HepG2 (cell line): ENCODE measurements at regions of chr22 and their contacts with region 1.

Region 1: GRCh38 chr22:32528984-32529982 is 54.7 kb downstream of the FBXO7 start:
- DNase-seq: peak; percentile 91
- ATAC-seq: peak; percentile 72
- H3K4me3 ChIP-seq: peak overlapping the region; percentile 27 to 52 (median 51); a peak in 3 of 6 replicates
- H3K27ac ChIP-seq: peak overlapping the region; percentile 76
- H3K4me1 ChIP-seq: peaks cover 65% of the 10 kb centered on the region
- H3K27me3 ChIP-seq: no peaks in the 10 kb centered on the region
- CTCF ChIP-seq: peak; percentile 99
- EP300 ChIP-seq: peak in 1 of 2 experiments; percentile 75; a peak in 2 of 4 replicates
- POLR2A ChIP-seq: 0 out of 4 replicates have a peak, but pooled peaks of 1 of the 2 experiments have one; percentile 31
- RAD21 ChIP-seq: peak; percentile 97

Region 2: GRCh38 chr22:32457031-32457430 is 72.3 kb before region 1 on chr22:
- CTCF ChIA-PET with region 1: no interaction called
- POLR2A ChIA-PET with region 1: no interaction called
- in situ Hi-C with region 1: no loop called
- intact Hi-C with region 1: no loop called
- DNase-seq: no peak
- ATAC-seq: no peak
- H3K4me3 ChIP-seq: no peak overlapping the region
- H3K27ac ChIP-seq: no peak overlapping the region
- H3K4me1 ChIP-seq: no peaks in the 10 kb centered on the region
- H3K27me3 ChIP-seq: peaks cover 0 to 14% of the 10 kb centered on the region in 2 experiments; a peak in 3 of 5 replicates
- CTCF ChIP-seq: no peak
- EP300 ChIP-seq: no peak
- POLR2A ChIP-seq: no peak
- RAD21 ChIP-seq: no peak

Region 3: DNA sequence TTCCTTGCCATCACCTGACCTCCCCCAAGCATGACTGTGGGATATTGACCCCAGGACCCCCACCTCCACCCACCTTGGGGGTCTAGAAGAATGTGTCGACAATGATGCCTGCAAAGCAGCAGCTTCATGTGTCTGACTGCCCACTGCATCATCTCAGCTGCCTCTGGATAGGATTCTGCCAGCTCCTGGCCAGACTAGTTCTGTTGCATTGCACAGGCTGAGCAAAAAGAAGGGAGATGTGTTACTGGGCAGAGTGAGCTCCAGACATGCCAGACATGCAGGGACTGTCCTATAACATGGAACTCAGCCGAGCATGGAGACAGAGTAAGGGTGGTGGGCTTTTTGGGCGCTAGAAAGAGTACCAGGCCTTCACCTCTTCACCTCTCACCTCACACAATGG is 18.0 kb before region 1 on chr22:
- CTCF ChIA-PET with region 1: no interaction called
- POLR2A ChIA-PET with region 1: interaction called, 11 read pairs
- in situ Hi-C with region 1: no loop called
- intact Hi-C with region 1: no loop called
- DNase-seq: no peak
- ATAC-seq: no peak
- H3K4me3 ChIP-seq: no peak overlapping the region
- H3K27ac ChIP-seq: peak overlapping the region; percentile 86
- H3K4me1 ChIP-seq: peaks cover 41% of the 10 kb centered on the region
- H3K27me3 ChIP-seq: no peaks in the 10 kb centered on the region
- CTCF ChIP-seq: no peak
- EP300 ChIP-seq: no peak
- POLR2A ChIP-seq: no peak
- RAD21 ChIP-seq: no peak

Region 4: DNA sequence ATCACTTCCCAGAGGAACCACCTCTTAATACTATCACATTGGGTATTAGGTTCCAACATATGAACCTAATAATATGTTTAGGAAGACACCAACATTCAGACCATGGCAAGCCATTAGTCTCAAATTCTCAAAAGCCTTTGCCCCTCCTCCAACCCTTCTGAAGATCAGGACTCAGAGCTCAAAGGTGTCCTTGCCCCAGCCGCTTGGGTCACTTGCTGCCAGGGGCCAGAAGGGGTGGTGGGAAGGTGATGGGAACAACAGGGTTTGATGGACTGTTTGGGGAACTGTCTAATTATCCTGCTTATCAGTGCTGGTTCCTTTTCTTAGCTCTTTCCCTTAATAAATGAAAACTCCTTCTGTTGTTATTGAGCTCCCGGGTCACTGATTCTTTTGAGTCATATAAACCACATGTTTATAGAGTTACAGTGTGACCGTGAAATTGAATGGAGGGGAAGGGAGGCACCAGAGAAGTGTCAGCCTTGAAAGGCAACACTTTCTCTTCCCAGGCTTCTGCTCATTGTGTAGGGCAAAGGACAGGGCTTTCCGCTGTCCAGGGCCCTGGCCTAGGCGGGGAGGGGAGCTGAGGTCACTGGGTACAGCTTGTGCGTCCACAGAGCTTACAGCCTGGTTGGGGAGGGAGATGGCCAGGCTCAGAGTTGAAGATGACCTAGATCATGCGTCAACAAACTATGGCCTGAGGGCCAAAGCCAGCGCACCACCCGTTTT is 50.4 kb after region 1 on chr22:
- CTCF ChIA-PET with region 1: no interaction called
- POLR2A ChIA-PET with region 1: interaction called, 143 read pairs
- in situ Hi-C with region 1: no loop called
- intact Hi-C with region 1: loop called (anchors 1 kb)
- DNase-seq: peak; percentile 50
- ATAC-seq: peak; percentile 85
- H3K4me3 ChIP-seq: no peak overlapping the region
- H3K27ac ChIP-seq: peak overlapping the region; percentile 43
- H3K4me1 ChIP-seq: peaks cover 62% of the 10 kb centered on the region
- H3K27me3 ChIP-seq: no peaks in the 10 kb centered on the region
- CTCF ChIP-seq: no peak
- EP300 ChIP-seq: 0 out of 4 replicates have a peak, but pooled peaks of 1 of the 2 experiments have one; percentile 20
- POLR2A ChIP-seq: no peak
- RAD21 ChIP-seq: no peak

Region 5: DNA sequence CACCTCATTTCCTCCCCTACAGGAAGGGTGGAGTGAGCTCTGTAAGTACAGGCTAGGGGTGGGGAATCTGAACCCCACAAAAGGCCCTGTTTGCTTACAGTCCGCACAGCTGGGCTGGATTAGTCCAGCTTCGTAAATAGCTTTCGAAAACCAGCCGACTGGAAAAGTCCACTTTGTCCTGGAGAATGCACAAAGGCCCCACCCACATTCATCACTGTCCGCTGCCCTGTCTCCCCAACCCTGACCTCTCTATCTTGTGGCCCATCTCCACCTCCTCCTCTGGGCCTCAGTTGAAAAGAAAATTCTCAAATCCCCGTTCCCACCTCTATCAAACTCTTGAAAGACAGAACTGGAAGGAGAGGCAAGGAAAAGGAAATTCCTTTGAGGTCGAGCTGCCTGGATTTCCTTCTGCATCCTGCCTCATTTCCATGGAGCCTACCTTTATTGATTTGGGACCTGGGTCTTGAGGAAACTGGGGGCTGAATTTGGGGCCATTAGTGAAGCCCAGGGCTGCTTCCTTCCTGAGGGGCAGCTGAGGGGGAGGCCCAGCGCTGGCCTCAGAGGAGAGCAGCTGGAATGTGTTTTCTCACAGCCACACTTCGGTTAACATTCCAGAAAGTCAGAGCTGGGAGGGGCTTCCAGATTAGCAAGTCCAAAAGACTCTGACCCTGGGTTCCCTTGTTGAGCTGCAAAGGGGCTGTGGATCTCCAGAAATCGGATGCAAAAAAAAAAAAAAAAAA is 92.9 kb after region 1 on chr22:
- CTCF ChIA-PET with region 1: no interaction called
- POLR2A ChIA-PET with region 1: interaction called, 145 read pairs
- in situ Hi-C with region 1: no loop called
- intact Hi-C with region 1: loop called (anchors 2 kb)
- DNase-seq: peak; percentile 89
- ATAC-seq: peak; percentile 80
- H3K4me3 ChIP-seq: peak overlapping the region; percentile 43 to 60 (median 50)
- H3K27ac ChIP-seq: peak overlapping the region; percentile 92
- H3K4me1 ChIP-seq: peaks cover 99% of the 10 kb centered on the region
- H3K27me3 ChIP-seq: no peaks in the 10 kb centered on the region
- CTCF ChIP-seq: no peak
- EP300 ChIP-seq: peak in 1 of 2 experiments; percentile 71; a peak in 2 of 4 replicates
- POLR2A ChIP-seq: peak in 1 of 2 experiments; percentile 49; a peak in 1 of 4 replicates
- RAD21 ChIP-seq: no peak

Region 6: GRCh38 chr22:32781695-32782094 is 252.4 kb after region 1 on chr22:
- CTCF ChIA-PET with region 1: no interaction called
- POLR2A ChIA-PET with region 1: interaction called, 27 read pairs
- in situ Hi-C with region 1: no loop called
- intact Hi-C with region 1: no loop called
- DNase-seq: no peak
- ATAC-seq: no peak
- H3K4me3 ChIP-seq: no peak overlapping the region
- H3K27ac ChIP-seq: peak overlapping the region; percentile 55
- H3K4me1 ChIP-seq: peaks cover 98% of the 10 kb centered on the region
- H3K27me3 ChIP-seq: no peaks in the 10 kb centered on the region
- CTCF ChIP-seq: no peak
- EP300 ChIP-seq: no peak
- POLR2A ChIP-seq: no peak
- RAD21 ChIP-seq: no peak

Region 7: DNA sequence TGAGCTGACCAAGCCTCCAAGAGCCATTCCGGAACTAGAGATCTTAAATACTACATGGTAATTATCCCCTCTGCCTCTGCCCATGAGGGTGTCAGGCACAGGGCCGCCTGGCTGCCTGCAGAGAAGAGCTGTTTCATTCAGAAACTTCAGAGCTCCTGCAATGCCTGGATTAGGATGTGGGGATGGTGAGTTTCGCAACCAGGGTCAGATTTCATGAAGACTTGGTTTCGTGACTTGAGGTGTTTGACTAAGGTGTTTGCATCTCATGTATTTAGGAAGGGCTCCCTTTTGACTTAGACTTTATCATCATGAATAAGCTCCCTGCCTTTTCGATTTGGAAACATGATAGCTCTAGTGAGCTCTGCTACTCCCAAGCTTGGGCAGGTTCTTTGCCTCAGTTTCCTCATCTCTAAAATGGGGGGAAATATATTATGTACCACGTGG is 281.3 kb after region 1 on chr22:
- CTCF ChIA-PET with region 1: no interaction called
- POLR2A ChIA-PET with region 1: interaction called, 16 read pairs
- in situ Hi-C with region 1: no loop called
- intact Hi-C with region 1: no loop called
- DNase-seq: no peak
- ATAC-seq: no peak; the same call in 1 of the 3 replicates
- H3K4me3 ChIP-seq: no peak overlapping the region
- H3K27ac ChIP-seq: peak overlapping the region; percentile 62
- H3K4me1 ChIP-seq: peaks cover 64% of the 10 kb centered on the region
- H3K27me3 ChIP-seq: no peaks in the 10 kb centered on the region
- CTCF ChIP-seq: no peak
- EP300 ChIP-seq: no peak
- POLR2A ChIP-seq: no peak
- RAD21 ChIP-seq: no peak

Region 8: DNA sequence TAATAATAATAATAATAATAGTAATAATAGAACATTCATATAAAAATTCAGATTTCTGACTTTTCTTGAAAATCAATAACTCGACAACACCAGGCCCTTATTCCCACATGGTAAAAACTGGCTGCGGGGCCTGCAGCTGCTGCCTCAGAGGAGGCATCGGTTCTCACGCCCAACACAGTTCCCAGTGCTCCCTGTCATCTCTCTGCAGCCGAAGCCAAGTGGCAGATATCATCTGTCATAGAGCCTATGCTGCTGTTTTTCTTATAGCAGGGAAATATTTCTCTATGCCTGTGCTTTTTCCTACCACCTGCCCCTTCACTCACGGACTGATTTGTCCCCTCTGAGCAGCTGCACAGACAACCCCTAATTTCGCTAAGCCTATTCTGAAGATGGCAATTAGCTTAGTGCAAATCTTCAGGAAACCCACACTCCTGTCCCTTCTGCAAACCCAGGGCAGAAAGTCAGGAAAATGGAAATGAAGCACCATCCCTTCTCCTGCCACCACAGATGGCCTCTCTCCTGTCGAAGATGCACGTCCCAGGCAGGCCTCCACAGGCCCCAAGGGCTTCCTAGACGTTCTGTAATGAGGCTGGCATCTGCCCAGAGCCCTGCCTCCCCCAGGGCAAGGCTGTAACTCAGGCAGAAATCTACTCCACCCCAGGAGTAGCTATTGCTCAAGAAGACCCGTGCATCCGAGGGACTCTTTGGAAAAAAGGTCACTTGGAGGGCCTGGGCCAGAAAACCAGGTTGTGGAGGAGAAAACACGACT is 462.3 kb after region 1 on chr22:
- CTCF ChIA-PET with region 1: no interaction called
- POLR2A ChIA-PET with region 1: no interaction called
- in situ Hi-C with region 1: loop called (anchors 10 kb)
- intact Hi-C with region 1: loop called (anchors 10 kb)
- DNase-seq: no peak
- ATAC-seq: no peak
- H3K4me3 ChIP-seq: no peak overlapping the region
- H3K27ac ChIP-seq: no peak overlapping the region
- H3K4me1 ChIP-seq: peaks cover 14% of the 10 kb centered on the region
- H3K27me3 ChIP-seq: no peaks in the 10 kb centered on the region
- CTCF ChIP-seq: no peak
- EP300 ChIP-seq: no peak
- POLR2A ChIP-seq: no peak
- RAD21 ChIP-seq: no peak